ENCODE measurements at regions of chr5 and their contacts with region 1.

Region 1: DNA sequence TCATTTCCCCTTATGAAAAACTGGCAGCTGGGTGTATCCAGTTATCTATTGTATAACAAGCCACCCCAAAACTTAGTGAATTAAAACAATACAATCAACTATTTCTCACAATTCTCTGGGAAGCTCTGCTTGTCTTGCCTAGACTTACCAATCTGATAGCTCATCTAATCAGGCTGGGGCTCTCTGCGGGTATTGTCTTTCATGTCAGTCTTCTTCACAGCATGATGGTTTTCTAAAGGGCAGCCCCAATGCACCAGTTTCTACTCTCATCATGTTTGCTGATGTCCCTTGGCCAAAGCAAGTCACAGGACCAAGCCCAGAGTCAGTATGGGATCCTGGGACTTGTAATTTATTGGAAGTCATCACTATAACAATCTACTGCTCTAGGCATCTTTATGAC is 433.5 kb downstream of the KIAA0825 start:
- DNase-seq: no peak
- ATAC-seq: no peak
- H3K4me3 Mint-ChIP-seq: no peak overlapping the region
- H3K27ac Mint-ChIP-seq: no peak overlapping the region
- H3K4me1 Mint-ChIP-seq: no peaks in the 10 kb centered on the region
- H3K27me3 Mint-ChIP-seq: peaks cover 4% of the 10 kb centered on the region

Region 2: GRCh38 chr5:93831449-93831848 is 353.4 kb before region 1 on chr5:
- CTCF ChIA-PET with region 1: no interaction called
- POLR2A ChIA-PET with region 1: no interaction called
- intact Hi-C with region 1: no loop called
- DNase-seq: no peak
- ATAC-seq: no peak
- H3K4me3 Mint-ChIP-seq: no peak overlapping the region
- H3K27ac Mint-ChIP-seq: no peak overlapping the region
- H3K4me1 Mint-ChIP-seq: no peaks in the 10 kb centered on the region
- H3K27me3 Mint-ChIP-seq: no peaks in the 10 kb centered on the region

Region 3: GRCh38 chr5:94932259-94932658 is 747.4 kb after region 1 on chr5:
- CTCF ChIA-PET with region 1: no interaction called
- POLR2A ChIA-PET with region 1: no interaction called
- intact Hi-C with region 1: loop called in 1 of 2 experiments (anchors 5 kb)
- DNase-seq: no peak
- ATAC-seq: no peak
- H3K4me3 Mint-ChIP-seq: no peak overlapping the region
- H3K27ac Mint-ChIP-seq: no peak overlapping the region
- H3K4me1 Mint-ChIP-seq: no peaks in the 10 kb centered on the region
- H3K27me3 Mint-ChIP-seq: peaks cover 5% of the 10 kb centered on the region

Measured in activated CD4-positive, alpha-beta T cell treated with anti-CD3 and anti-CD28 coated beads for 36 hours (primary cell).